Ascending aorta (tissue), 2 donors: ENCODE measurements at regions of chr7 and their contacts with region 1.

Region 1: DNA sequence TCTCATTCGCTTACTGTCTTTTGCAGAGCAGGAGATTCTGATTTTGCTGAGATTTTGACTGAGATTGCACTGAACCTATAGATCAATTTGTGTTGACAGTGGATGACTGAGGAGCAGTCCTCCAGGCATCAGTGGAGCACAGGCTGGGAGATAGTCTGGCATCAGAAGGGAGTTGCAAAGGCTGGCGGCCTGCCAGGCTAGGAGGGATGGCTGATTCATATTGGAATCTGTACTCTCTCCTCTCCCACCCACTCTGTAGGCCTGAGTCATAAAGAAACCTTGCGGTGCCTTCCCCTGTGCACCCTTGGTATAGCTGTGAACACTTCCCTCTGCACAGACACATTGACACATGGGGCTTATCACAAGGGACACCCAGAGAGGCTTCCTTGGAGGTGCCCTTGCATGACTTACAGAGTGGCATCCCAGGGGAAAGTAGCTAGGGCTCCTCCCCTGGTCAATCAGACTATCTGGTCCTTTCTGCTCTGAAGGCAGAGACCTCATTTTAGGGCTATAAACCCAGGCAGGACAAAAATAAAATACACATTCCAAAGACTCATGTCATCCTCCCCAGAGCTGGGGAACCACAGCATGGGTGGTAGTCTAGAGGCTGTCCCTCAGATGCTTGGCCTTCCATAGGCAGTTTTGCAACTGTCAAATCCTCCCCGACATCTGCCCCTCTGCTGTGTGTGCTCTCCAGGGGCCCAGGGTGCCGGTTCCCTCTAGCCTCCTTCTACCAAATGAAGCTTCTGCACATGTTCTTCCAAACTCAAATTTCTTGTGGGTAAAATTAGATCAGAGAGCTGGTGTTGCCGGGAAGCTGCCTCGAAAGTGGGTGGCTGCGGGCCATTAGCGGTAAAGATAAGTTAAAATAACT is 37.4 kb upstream of the EEPD1 start:
- DNase-seq: peak; percentile 21 to 91
- H3K4me3 ChIP-seq: peak overlapping the region in 1 of 2 donors; percentile 6
- H3K27ac ChIP-seq: peak overlapping the region; percentile 78 to 82
- H3K4me1 ChIP-seq: peaks cover 24 to 45% of the 10 kb centered on the region in 2 donors
- H3K27me3 ChIP-seq: no peaks in the 10 kb centered on the region
- CTCF ChIP-seq: no peak

Region 2: GRCh38 chr7:35380739-35381224 is 734.9 kb before region 1 on chr7:
- intact Hi-C with region 1: no loop called
- DNase-seq: no peak
- H3K4me3 ChIP-seq: no peak overlapping the region
- H3K27ac ChIP-seq: no peak overlapping the region
- H3K4me1 ChIP-seq: no peaks in the 10 kb centered on the region
- H3K27me3 ChIP-seq: no peaks in the 10 kb centered on the region
- CTCF ChIP-seq: no peak

Region 3: DNA sequence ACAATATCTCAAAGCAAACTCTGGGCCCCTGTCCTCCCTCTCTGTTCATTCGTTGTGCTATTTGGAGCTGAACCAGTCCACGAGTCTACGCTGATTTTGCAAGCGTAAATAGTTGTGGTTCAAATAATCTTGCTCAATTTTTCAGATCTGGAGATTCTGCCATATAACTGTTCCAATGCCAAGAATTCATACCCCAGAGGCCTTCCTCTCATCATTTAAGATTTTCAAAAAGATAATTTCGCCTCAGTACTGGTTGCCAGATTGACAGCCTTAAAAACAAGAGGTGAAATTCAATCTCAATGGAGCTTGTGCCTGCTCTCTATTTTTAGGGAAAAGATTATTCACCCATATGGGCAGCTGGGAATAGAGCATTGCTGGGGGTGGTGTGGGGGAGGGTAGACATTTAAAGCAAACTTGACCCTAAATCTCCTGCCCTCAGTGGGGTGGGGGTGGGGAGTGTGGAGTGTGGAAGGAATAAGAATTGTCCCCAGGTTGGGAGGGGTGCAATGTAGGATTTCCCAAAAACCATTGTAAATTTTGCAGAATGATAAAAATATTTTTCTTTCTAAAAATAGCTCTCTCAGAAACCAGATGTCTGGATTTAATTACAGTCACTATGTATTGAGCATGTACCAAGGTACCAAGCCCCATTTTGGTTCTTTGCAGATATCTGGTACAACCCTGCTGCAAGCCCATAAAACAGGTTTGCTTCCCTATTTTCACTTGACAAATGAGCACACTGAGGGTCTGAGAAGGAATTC is 67.4 kb before region 1 on chr7:
- intact Hi-C with region 1: loop called (anchors 5 kb)
- DNase-seq: peak in 1 of 2 donors; percentile 63
- H3K4me3 ChIP-seq: no peak overlapping the region
- H3K27ac ChIP-seq: peak overlapping the region; percentile 57 to 63
- H3K4me1 ChIP-seq: peaks cover 9 to 38% of the 10 kb centered on the region in 2 donors
- H3K27me3 ChIP-seq: no peaks in the 10 kb centered on the region
- CTCF ChIP-seq: no peak

Region 4: GRCh38 chr7:36128448-36129047 is 12.9 kb after region 1 on chr7:
- intact Hi-C with region 1: loop called (anchors 1 kb)
- DNase-seq: peak; percentile 59 to 93
- H3K4me3 ChIP-seq: peak overlapping the region in 1 of 2 donors; percentile 14
- H3K27ac ChIP-seq: peak overlapping the region; percentile 66 to 72
- H3K4me1 ChIP-seq: peaks cover 6 to 15% of the 10 kb centered on the region in 2 donors
- H3K27me3 ChIP-seq: no peaks in the 10 kb centered on the region
- CTCF ChIP-seq: peak; percentile 70 to 79 (median 73)